GM13976 (cell line): ENCODE measurements at regions of chr3 and their contacts with region 1.

Region 1: GRCh38 chr3:113912552-113913236 is 35.1 kb upstream of the ZDHHC23 start:
- DNase-seq: peak; percentile 55
- CTCF ChIP-seq: peak; percentile 63

Region 2: GRCh38 chr3:113736548-113737089 is 176.1 kb before region 1 on chr3:
- in situ Hi-C with region 1: loop called (anchors 10 kb)
- DNase-seq: peak; percentile 42
- CTCF ChIP-seq: peak; percentile 26

Region 3: GRCh38 chr3:113825090-113825489 is 87.6 kb before region 1 on chr3:
- in situ Hi-C with region 1: no loop called
- DNase-seq: peak; percentile 71
- CTCF ChIP-seq: no peak

Region 4: DNA sequence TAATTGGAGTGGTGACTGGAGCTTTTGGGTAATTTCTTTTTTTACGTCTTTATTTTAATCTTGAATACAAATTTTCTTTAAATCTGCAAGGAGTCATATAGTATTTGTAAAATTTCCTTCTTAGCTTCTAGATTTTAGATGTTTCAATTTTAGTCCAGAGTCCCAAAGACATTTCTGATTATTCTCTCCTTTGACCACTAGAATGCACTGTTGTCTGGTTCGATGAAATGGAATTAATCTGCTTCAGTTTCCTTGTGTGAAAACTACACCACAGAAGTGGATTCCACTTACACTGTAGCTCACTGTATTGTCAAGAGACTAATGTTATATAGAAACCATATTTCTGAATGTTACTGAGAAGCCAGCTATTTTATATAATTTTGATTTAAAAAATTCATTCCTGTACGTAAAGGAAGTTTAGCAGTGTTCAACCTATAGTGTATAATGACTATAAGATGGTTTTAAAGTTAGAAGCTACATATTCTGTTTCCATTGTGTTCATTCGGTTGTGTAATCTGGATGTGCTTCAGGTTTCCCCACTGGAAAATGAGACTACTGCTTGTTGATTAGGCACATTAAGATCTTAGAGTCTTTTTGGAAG is 68.0 kb before region 1 on chr3:
- in situ Hi-C with region 1: loop called (anchors 10 kb)
- DNase-seq: peak; percentile 47
- CTCF ChIP-seq: peak; percentile 26